Motor neuron (in vitro differentiated cells): ENCODE measurements at regions of chr10 and their contacts with region 1.

Region 1: GRCh38 chr10:103712570-103713498 is 142.5 kb downstream of the SH3PXD2A start:
- ATAC-seq: peak; percentile 75 to 94 (median 81)
- H3K4me3 ChIP-seq: no peak overlapping the region
- H3K27ac ChIP-seq: no peak overlapping the region
- H3K4me1 ChIP-seq: no peaks in the 10 kb centered on the region

Region 2: DNA sequence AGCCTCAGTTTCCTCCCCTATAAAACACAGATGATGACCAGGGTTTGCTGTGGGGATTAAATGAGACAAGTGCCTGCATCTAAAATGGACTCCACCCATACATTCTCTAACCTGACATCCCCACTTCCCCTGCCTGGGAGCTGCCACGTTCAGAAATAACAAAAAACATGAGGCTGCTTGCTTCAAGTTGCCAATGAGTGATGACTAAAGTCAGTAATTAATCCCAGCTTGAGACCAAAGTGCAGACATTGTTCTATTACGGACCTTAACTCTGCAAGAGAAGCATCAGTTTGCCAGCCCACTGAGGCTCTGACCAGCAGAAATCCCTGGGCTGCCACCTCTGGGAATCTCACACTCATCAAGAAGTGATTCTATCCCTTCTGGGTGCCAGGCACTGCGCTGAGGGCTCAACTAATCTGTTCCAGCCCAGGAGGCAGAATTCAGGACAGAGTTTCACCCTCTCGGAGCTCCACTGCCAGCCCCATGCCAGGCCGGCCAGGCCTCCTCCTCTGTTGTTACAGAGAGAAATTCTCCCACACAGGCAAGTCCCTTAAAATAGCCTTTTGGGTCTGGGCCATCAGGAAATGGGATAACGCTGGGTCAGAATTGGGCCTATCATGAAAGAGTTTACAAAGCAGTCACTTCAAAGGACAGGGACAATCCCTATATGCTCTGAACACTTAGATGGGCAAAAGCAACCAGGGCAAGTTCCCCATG is 131.2 kb after region 1 on chr10:
- in situ Hi-C with region 1: no loop called
- ATAC-seq: no peak
- H3K4me3 ChIP-seq: no peak overlapping the region
- H3K27ac ChIP-seq: no peak overlapping the region
- H3K4me1 ChIP-seq: peaks cover 26 to 37% of the 10 kb centered on the region in 2 donors

Region 3: DNA sequence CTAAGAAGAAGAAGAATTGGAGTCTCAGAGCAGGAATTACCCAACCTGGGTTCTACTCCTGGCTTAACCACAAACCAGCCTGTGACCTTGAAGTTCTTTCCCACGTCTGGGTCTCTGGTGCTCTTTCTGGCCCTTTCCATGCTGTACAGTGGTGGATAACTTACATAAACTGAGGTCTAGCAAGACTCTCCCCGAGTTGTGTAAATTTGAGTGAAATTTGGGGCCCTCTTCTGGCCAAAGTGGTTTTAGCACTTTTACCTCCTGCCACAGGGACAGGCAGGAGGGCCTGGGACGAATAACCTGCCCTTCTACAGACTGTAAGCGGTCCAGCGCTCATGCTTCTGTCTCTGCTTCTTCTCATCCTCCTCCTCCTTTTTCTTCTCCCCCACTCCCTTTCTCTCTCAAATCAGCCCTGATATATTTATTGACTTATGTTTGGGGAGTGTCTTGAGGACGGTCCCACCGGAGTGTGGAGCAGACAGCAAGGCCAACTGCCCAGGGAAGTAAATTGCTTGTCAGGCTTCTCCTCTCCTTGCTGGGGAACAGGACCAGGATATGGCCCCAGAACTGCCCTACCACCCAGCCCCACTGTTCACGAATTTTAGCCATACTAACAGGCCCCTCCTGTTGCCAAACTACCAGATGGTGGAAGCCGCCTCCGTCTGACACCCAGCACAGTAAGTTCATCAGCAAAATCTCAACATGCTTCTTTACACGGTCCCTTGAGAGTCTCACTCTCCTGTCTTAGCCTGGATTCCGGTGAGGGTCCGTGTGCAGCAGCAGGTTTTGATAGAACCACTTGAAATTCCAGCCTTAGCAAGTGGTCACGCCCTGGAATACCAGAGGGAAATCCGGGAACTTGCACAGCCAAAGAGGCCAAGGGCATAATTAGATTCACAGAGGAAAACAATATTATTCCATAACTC is 146.6 kb after region 1 on chr10:
- in situ Hi-C with region 1: loop called in 7 of 9 experiments (anchors 5 to 25 kb)
- ATAC-seq: peak in 4 of 8 experiments; percentile 15 to 75 (median 52)
- H3K4me3 ChIP-seq: no peak overlapping the region
- H3K27ac ChIP-seq: no peak overlapping the region
- H3K4me1 ChIP-seq: peaks cover 17 to 24% of the 10 kb centered on the region in 2 donors

Region 4: DNA sequence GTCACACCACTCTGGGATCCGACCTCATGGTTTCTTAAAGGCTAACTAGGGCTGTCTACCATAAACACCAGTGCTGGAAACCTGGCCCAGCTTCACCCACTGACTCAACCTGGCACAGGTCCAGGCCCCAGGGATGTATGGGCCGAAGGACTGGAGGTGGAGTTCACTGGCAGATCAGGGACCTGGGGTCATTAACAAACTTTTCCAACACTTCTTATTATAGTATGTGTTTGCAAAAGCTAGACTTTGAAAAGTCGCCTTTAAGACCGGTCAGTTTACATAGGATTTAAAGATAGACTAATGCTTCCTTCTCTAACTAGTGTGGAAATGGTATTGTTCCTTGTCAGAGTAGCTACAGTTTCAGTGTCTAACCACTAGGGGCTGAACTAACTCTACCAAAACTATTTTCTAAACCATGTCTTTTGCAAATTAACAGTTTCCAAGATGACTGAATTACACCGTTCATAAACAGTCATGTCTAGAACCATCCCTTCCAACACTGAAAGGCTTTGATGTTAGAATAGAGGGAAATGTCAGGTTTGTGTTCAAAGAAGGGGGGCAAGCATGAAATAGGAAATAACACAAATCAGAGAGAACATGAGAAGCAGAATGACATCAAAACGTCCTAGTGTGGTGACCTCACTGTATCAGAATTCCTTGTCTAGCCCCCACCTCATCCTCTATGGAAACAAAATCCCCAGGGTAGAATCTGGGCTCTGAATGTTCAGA is 175.4 kb after region 1 on chr10:
- in situ Hi-C with region 1: loop called in 2 of 9 experiments (anchors 10 kb)
- ATAC-seq: peak; percentile 38 to 82 (median 64)
- H3K4me3 ChIP-seq: no peak overlapping the region
- H3K27ac ChIP-seq: no peak overlapping the region
- H3K4me1 ChIP-seq: peaks cover 4% of the 10 kb centered on the region in 2 donors

Region 5: DNA sequence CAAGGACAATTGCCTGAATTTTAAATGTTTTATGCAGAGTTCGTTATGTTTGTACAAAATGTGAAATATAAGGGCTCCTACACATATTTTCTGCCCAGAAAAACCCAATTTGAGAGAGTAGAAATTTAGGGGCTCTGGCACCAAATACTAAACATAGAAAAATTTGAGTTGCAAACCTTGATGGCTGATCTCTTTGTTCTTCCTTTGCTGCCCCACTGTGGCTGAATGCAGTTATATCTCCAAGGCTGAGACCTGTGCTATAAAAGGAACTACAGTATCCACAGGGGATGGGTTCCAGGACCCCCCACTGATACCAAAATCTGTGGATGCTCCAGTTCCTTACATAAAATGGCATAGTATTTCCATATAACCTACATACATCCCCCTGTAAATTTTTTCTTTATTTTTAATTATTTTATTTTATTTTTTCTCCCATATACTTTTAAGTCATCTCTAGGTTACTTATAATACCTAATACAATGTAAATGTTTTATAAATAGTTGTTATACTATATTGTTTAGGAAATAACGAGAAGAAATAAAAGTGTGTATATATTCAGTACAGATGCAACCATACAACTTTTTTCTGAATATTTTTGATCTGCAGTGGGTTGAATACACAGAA is 496.9 kb after region 1 on chr10:
- in situ Hi-C with region 1: loop called in 1 of 9 experiments (anchors 25 kb)
- ATAC-seq: peak in 5 of 8 experiments; percentile 50 to 72 (median 62)
- H3K4me3 ChIP-seq: no peak overlapping the region
- H3K27ac ChIP-seq: no peak overlapping the region
- H3K4me1 ChIP-seq: no peaks in the 10 kb centered on the region